Head of caudate nucleus (tissue), 42 donors: ENCODE measurements at regions of chr16 and their contacts with region 1.

Region 1: GRCh38 chr16:67883872-67884261 is 818 bp upstream of the NRN1L start:
- DNase-seq: peak in 41 of 42 donors; percentile 31 to 85 (median 69)

Region 2: DNA sequence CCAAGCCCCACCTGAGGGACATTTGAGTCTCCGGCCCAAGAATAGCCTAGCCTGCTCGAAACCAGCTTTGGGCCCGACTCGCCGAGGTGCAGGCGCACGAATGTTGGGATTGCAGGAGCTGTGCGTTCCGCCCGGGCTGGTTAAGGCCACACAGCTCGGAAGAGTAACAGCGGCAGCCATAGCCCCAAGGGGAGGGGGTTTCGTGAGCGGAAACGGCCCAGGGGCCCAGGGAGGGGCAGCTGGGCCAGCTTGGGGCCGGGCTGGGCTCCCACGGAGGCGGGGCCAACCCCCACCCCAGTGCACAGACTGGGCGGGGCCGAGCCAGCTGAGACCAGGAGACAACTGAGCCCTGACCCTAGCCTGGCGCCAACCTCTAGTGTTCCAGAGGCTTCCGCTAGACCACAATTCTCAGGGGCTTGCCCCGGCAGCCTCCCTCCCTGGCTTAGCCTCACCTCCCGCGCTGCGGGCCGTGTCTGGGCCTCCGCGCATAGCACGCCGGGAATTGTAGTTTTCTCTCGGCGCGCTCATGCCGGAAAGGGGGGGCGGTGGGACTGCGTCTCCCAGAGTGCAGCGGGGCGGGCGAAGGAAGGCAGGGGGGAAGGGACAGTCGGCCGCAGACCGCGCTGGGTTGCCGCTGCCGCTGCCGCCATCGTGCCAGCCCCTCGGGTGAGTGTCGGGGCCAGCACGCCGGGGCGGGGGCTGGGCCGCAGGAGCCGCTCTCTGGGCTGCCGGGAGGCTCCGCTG is 37.4 kb before region 1 on chr16 and contains the start of gene NUTF2:
- intact Hi-C with region 1: loop called (anchors 2 kb)
- DNase-seq: peak; percentile 86 to 98 (median 95)

Region 3: GRCh38 chr16:67928561-67929364 is 44.9 kb after region 1 on chr16:
- intact Hi-C with region 1: loop called (anchors 2 kb)
- DNase-seq: peak; percentile 78 to 93 (median 86)

Region 4: DNA sequence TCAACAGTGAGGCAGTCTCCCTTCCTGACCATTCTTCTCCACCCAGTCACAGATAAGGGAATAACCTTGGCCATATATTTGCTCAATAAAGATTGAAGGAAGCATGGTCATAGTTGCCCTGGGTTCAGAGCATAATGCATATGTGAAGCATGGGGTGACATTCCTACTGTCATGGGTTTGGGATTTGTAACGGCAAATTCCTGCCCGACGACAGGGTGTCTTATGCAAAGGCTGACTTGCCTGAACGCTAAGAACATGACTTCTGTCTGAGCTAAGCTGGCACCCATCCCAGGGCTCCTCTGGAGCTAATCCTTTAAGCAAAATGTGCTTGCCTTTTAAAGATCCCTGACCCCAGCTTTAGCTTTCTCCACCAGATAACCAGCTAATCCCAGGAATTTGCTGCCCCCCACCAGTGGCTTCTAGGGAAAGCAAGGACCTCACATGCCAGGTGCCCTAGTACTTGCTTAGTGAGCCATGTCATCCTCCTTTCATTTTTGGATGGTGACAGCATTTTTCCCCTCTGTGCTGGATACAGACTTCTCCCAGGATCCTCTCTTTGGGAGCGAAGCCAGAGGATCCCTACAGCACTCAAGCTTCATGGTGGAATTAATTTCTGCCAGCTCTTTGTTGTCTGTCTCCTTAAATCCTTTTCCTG is 415.2 kb after region 1 on chr16:
- intact Hi-C with region 1: no loop called
- DNase-seq: peak in 38 of 42 donors; percentile 13 to 69 (median 42)